ENCODE measurements at regions of chr2 and their contacts with region 1.

Region 1: GRCh38 chr2:215435809-215436704 is at the start of gene FN1:
- DNase-seq: peak; percentile 54
- H3K4me3 Mint-ChIP-seq: peak within 1 kb of the TSS; percentile 85
- H3K27ac Mint-ChIP-seq: peak within 1 kb of the TSS; percentile 7
- H3K4me1 Mint-ChIP-seq: peaks cover 11% of the 10 kb centered on the region
- H3K27me3 Mint-ChIP-seq: peaks cover 73% of the 10 kb centered on the region
- total RNA-seq, gene FN1: 1.6 and 2.7 TPM in 2 replicates

Region 2: DNA sequence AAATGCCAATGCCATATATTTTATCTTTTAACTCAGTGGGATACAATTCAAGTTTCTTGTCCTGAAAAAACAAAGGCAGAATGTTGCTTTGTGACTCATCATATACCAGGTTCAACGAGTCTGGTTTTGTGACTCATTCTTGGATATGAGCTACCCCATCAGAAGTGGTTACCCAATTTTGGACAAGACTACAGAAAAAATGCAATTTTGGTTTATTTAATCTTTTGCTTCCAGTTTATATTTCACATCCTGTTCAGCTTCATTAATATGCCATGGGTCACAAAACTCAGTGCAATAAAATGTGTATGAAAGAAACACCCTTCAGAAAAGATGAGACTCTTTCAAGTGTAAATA is 25.1 kb before region 1 on chr2:
- intact Hi-C with region 1: loop called (anchors 2 kb)
- DNase-seq: no peak
- H3K4me3 Mint-ChIP-seq: no peak overlapping the region
- H3K27ac Mint-ChIP-seq: no peak overlapping the region
- H3K4me1 Mint-ChIP-seq: peaks cover 24% of the 10 kb centered on the region
- H3K27me3 Mint-ChIP-seq: peaks cover 11% of the 10 kb centered on the region

Measured in activated T-helper 1 cell treated with anti-CD3 and anti-CD28 coated beads, Interleukin-12 subunit alpha, Interleukin-12 subunit beta, Interleukin-2, Interleukin-4 antibody, amounts not matched to agents 30 ng/mL and 10 ng/mL and 1 ng/mL, durations not matched to agents 14 hours and 24 hours and 36 hours (primary cell).